Left cardiac atrium (tissue), 4 donors: ENCODE measurements at regions of chr14 and their contacts with region 1.

Region 1: GRCh38 chr14:20682435-20683124 is 1.8 kb upstream of the RNASE4 start:
- DNase-seq: peak; percentile 92
- ATAC-seq: peak; percentile 88 to 89

Region 2: DNA sequence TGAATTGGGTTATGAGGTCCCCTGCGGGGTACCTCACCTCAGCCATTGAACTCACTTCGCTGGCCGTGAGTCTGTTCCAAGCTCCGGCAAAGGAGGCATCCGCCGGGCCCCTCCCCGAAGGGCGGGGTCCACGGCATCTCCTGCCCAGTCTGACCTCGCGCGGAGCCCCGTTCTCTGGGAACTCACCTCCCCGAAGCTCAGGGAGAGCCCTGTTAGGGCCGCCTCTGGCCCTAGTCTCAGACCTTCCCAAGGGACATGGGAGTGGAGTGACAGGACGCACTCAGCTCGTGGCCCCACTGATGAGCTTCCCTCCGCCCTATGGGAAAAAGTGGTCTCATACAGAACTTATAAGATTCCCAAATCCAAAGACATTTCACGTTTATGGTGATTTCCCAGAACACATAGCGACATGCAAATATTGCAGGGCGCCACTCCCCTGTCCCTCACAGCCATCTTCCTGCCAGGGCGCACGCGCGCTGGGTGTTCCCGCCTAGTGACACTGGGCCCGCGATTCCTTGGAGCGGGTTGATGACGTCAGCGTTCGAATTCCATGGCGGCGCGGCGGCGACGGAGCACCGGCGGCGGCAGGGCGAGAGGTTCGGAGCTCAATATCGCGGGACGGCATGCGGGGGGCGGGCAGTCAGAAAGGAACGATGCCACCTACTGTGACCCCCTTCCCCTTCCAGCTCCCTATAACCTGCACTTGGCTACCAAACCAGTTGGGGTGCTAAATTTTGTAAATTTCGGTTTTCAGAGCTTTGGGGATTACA is 339.3 kb before region 1 on chr14 and contains the start of gene PARP2:
- intact Hi-C with region 1: loop called in 1 of 2 experiments (anchors 5 kb)
- DNase-seq: peak; percentile 98
- ATAC-seq: peak; percentile 95 to 98
- total RNA-seq, gene PARP2: 12.5 to 13.6 TPM

Region 3: DNA sequence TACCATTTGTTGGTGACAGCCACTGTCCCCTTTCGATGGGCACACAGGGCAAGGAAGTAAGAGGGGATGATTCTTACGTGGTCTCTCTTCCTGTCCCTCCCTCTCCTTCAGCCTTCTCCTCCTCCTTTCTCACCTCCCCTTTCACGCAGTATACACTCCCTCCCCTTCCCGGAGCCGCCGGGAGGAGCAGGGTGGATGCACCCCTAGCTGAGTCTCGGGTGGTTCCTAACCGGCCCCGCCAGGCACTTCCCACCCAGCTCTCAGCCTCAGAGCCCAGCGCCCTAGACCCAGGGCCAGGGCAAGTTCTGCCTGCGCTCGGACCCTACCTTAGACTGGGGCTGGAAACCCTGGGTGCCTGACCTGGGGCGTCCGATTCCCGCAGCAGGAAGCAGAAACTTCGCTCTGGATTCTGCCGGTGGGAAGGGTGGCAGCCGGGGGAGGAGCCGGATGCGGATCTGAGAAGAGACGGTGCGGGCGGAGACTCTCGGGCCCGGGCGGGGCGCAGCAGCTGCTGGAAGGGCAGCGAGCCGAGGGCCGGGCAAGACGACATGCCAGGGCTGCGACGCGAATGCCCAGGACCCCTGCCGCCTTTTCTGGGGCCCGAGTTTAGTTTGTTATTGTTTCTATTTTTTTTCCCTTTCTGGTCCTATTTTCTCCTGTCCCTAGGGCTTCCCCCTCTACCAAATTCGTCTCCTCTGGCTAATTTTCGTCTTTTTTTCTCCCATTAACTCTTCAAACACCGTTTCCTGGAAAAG is 269.4 kb before region 1 on chr14 and contains the start of gene TEP1:
- intact Hi-C with region 1: loop called in 1 of 2 experiments (anchors 5 kb)
- DNase-seq: peak; percentile 94
- ATAC-seq: peak; percentile 97
- total RNA-seq, gene TEP1: 13.1 to 17.1 TPM

Region 4: GRCh38 chr14:20454516-20455354 is 227.8 kb before region 1 on chr14 and contains the starts of genes APEX1 and OSGEP:
- intact Hi-C with region 1: loop called in 1 of 2 experiments (anchors 10 kb)
- DNase-seq: peak; percentile 99
- ATAC-seq: peak; percentile 96
- total RNA-seq, gene APEX1: 68.3 to 91.5 TPM
- total RNA-seq, gene OSGEP: 15.4 to 23.5 TPM

Region 5: GRCh38 chr14:20613094-20614037 is 69.2 kb before region 1 on chr14:
- intact Hi-C with region 1: loop called (anchors 1 to 5 kb)
- DNase-seq: peak; percentile 83
- ATAC-seq: peak; percentile 79 to 88

Region 6: GRCh38 chr14:20624495-20625070 is 58.0 kb before region 1 on chr14:
- intact Hi-C with region 1: loop called in 1 of 2 experiments (anchors 5 kb)
- DNase-seq: peak; percentile 68
- ATAC-seq: peak; percentile 66 to 68

Region 7: GRCh38 chr14:21317398-21317797 is 634.8 kb after region 1 on chr14:
- intact Hi-C with region 1: no loop called
- DNase-seq: no peak
- ATAC-seq: no peak